Lower leg skin (tissue), 4 donors: ENCODE measurements at regions of chr1 and their contacts with region 1.

Region 1: DNA sequence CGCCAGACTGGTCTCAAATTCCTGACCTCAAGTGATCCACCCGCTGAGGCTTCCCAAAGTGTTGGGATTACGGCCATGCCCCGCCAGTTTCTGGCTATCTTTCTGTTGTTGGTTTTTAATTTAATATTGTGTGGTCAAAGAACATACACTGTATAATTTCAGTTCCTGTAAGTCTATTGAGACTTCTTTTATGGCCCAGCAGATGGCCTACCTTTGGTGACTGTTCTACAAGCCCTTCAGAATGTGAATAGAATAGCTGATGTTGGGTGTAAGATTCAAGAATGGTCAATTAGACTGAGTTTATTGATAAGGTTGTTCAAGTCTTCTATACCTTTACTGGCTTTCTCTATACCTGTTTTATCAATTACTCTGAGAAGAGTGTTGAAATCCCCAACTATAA is 10.7 kb downstream of the HES2 start:
- DNase-seq: no peak
- H3K4me3 ChIP-seq: no peak overlapping the region
- CTCF ChIP-seq: no peak
- POLR2A ChIP-seq: no peak

Region 2: GRCh38 chr1:6367381-6368012 is 41.6 kb before region 1 on chr1:
- intact Hi-C with region 1: loop called (anchors 5 kb)
- DNase-seq: no peak
- H3K4me3 ChIP-seq: no peak overlapping the region
- CTCF ChIP-seq: no peak
- POLR2A ChIP-seq: no peak